ENCODE measurements at regions of chr1 and their contacts with region 1.

Region 1: GRCh38 chr1:156728597-156729462 is at the start of gene ISG20L2:
- DNase-seq: peak; percentile 98
- ATAC-seq: peak; percentile 93
- total RNA-seq, gene ISG20L2: 12.0 TPM

Region 2: DNA sequence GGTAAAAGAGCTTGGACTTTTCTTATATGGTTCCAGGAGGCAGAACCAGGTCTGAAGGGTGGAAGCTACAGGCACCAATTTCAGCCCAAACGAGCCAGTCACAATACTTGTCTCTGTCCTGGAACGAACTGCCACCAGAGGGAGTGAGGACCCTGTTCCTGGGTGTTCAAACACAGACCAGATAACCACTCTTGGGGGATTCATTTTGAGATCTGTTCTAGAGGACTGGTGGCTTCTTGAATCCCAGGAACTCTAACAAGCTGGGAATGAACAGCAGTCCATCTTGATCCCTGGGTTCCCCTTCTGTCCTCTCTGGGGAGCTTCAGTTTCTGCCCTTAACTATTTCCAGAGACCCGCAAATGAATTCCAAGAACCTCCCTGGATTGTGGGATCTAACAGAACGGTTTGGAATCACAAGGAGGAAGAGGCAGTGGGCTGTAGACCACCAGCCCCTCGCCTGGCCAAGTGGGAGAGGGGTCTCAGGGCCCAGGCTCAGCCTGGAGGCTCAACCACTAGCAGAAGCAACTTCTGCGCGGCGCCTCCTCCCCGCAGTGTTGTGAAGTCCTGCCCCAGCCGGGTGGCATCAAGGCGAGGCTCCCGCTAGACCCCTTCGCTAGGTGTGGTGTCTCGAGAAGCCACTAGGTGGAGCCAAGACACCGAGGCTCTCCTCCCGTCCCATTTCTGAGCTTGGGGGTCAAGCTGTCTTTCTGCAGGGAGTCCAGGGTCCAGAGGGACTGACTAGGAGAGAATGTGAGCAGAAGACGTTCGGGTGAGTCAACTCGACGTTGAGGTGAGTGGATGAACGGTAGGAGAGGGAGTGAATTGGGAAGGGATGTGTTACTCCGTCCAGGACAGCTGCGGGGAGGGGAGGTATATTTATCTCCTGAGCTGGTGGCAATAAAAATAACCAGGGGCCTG is 39.5 kb before region 1 on chr1:
- intact Hi-C with region 1: loop called (anchors 1 kb)
- DNase-seq: peak; percentile 80
- ATAC-seq: peak; percentile 94

Region 3: GRCh38 chr1:156767101-156767878 is 38.5 kb after region 1 on chr1 and contains the start of gene PRCC:
- intact Hi-C with region 1: loop called (anchors 5 kb)
- DNase-seq: peak; percentile 96
- ATAC-seq: peak; percentile 97
- total RNA-seq, gene PRCC: 41.3 TPM

Region 4: GRCh38 chr1:156948708-156949107 is 219.9 kb after region 1 on chr1:
- intact Hi-C with region 1: no loop called
- DNase-seq: no peak
- ATAC-seq: no peak

Region 5: DNA sequence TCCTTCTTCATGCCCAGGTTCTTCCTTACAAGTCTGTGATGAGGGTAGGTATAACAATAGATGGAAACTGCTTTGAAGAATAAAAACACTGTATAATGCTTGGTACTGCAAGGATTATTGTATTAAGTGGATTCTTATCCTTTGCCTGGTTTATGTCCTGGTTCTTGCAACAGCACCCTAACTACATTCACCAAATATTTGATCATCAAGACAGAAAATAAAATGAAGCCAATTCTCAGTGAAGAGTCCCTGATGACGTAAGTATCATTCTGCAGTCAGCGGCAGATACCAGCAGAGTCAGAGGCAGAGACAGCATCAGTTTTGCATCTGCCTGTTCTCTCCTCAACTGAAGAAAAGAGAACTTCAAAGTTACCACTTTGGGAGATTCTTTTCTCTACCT is 297.0 kb after region 1 on chr1:
- intact Hi-C with region 1: no loop called
- DNase-seq: no peak
- ATAC-seq: peak; percentile 61

Measured in left ventricle myocardium superior (tissue), 1 donor.